Naive thymus-derived CD4-positive, alpha-beta T cell (primary cell): ENCODE measurements at regions of chr13 and their contacts with region 1.

Region 1: GRCh38 chr13:52617070-52618060 is 24.9 kb upstream of the HNRNPA1L2 start:
- DNase-seq: peak; percentile 61 to 85 (median 81)
- ATAC-seq: peak; percentile 97
- H3K4me3 ChIP-seq: peak overlapping the region; percentile 90
- H3K4me3 Mint-ChIP-seq: peak overlapping the region; percentile 86 to 100 (median 99)
- H3K27ac ChIP-seq: peak overlapping the region; percentile 76
- H3K27ac Mint-ChIP-seq: peak overlapping the region; percentile 95 to 97 (median 96)
- H3K4me1 ChIP-seq: peaks cover 0 to 13% of the 10 kb centered on the region in 2 donors
- H3K4me1 Mint-ChIP-seq: peaks cover 19 to 57% (median 39%) of the 10 kb centered on the region in 7 donors
- H3K27me3 ChIP-seq: no peaks in the 10 kb centered on the region
- H3K27me3 Mint-ChIP-seq: peaks cover 0 to 8% (median 0%) of the 10 kb centered on the region in 5 donors

Region 2: GRCh38 chr13:52599848-52600603 is 17.3 kb before region 1 on chr13:
- CTCF ChIA-PET with region 1: no interaction called
- POLR2A ChIA-PET with region 1: no interaction called
- intact Hi-C with region 1: no loop called
- DNase-seq: peak in 1 of 9 donors; percentile 35
- ATAC-seq: peak; percentile 31
- H3K4me3 ChIP-seq: no peak overlapping the region
- H3K4me3 Mint-ChIP-seq: peak overlapping the region; percentile 59 to 83 (median 77)
- H3K27ac ChIP-seq: no peak overlapping the region
- H3K27ac Mint-ChIP-seq: no peak overlapping the region
- H3K4me1 ChIP-seq: peaks cover 0 to 5% of the 10 kb centered on the region in 2 donors
- H3K4me1 Mint-ChIP-seq: peaks cover 5 to 16% (median 12%) of the 10 kb centered on the region in 7 donors
- H3K27me3 ChIP-seq: no peaks in the 10 kb centered on the region
- H3K27me3 Mint-ChIP-seq: peaks cover 18 to 48% (median 38%) of the 10 kb centered on the region in 5 donors

Region 3: GRCh38 chr13:52652196-52652979 is 35.0 kb after region 1 on chr13 and contains the start of gene SUGT1:
- CTCF ChIA-PET with region 1: interaction called, 25 read pairs
- POLR2A ChIA-PET with region 1: interaction called, 100 read pairs
- intact Hi-C with region 1: loop called (anchors 1 kb)
- DNase-seq: peak; percentile 90 to 97 (median 95)
- ATAC-seq: peak; percentile 96
- H3K4me3 ChIP-seq: peak within 1 kb of the TSS; percentile 87
- H3K4me3 Mint-ChIP-seq: no peak within 1 kb of the TSS
- H3K27ac ChIP-seq: peak within 1 kb of the TSS; percentile 94
- H3K27ac Mint-ChIP-seq: no peak within 1 kb of the TSS
- H3K4me1 ChIP-seq: peaks cover 17 to 22% of the 10 kb centered on the region in 2 donors
- H3K4me1 Mint-ChIP-seq: peaks cover 6 to 18% (median 13%) of the 10 kb centered on the region in 7 donors
- H3K27me3 ChIP-seq: no peaks in the 10 kb centered on the region
- H3K27me3 Mint-ChIP-seq: no peaks in the 10 kb centered on the region
- total RNA-seq, gene SUGT1: 21.3 to 49.0 (median 33.8) TPM

Region 4: DNA sequence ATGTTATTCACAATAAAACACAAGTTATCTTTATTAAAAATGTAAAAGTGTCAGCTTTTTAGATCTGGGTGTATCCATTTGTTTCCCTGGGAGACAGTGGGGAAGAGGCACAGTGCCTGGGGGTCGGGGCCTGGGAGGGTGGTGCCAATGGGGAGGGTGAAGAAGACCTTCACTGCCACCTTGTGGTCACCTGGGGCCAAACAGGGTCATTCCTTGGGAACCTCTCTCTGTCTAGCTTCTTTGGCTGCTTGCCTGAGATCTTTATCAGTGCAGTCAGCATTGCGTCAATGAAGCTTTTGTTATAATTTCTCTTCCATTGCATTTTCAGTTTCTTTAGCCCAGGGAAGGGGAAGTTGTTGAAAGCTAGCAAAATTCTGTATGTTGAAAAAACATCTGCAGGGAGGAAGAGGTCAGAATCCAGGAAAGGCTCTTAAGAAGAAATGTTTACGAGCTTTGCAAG is 192.0 kb after region 1 on chr13:
- CTCF ChIA-PET with region 1: no interaction called
- POLR2A ChIA-PET with region 1: no interaction called
- intact Hi-C with region 1: loop called in 1 of 2 experiments (anchors 2 kb)
- DNase-seq: peak in 6 of 9 donors; percentile 3 to 38 (median 14)
- ATAC-seq: peak; percentile 67
- H3K4me3 ChIP-seq: no peak overlapping the region
- H3K4me3 Mint-ChIP-seq: no peak overlapping the region
- H3K27ac ChIP-seq: no peak overlapping the region
- H3K27ac Mint-ChIP-seq: no peak overlapping the region
- H3K4me1 ChIP-seq: no peaks in the 10 kb centered on the region
- H3K4me1 Mint-ChIP-seq: peaks cover 0 to 6% (median 0%) of the 10 kb centered on the region in 7 donors
- H3K27me3 ChIP-seq: no peaks in the 10 kb centered on the region
- H3K27me3 Mint-ChIP-seq: peaks cover 13 to 43% (median 24%) of the 10 kb centered on the region in 5 donors

Region 5: DNA sequence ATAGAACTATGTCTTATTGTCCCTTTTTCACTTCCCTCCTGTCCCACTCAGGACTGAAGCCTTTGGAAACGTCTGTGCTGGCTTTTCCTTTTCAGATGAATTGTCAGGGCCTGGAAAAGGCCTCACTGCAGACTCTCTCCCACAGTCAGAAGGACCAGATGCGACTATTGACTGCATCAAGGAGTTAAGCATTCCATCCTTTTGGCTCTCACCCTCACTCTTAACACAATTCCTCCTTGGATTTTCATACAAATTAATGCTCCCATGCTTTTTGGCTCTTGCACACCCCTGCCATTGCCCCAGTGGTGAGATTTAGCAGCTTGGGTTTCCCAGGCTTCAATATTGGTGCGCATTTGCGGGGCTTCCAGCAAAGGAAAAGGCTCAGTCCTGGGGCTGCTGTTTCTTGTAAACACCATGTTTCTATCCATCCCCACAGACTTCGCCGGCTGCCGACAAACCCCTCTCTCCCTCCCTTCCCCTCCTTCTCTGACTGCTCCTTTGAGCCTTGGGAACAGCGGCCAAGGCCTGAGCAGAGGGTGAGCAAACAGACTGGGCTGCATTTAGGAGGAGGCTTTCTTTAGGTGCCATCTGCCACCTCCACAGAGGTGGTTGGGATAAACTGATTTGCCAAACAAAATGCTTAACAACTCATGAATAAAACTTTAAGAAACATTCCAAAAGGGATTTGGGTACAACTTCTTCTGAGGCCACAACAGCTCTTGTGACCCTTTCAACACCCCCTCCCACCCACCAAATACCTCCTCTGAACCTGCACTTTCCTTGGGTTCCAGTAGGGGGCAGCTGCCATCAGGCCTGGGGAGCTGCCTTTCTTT is 279.7 kb after region 1 on chr13:
- CTCF ChIA-PET with region 1: no interaction called
- POLR2A ChIA-PET with region 1: no interaction called
- intact Hi-C with region 1: no loop called
- DNase-seq: no peak
- ATAC-seq: no peak
- H3K4me3 ChIP-seq: no peak overlapping the region
- H3K4me3 Mint-ChIP-seq: no peak overlapping the region
- H3K27ac ChIP-seq: no peak overlapping the region
- H3K27ac Mint-ChIP-seq: no peak overlapping the region
- H3K4me1 ChIP-seq: no peaks in the 10 kb centered on the region
- H3K4me1 Mint-ChIP-seq: peaks cover 0 to 1% (median 0%) of the 10 kb centered on the region in 7 donors
- H3K27me3 ChIP-seq: no peaks in the 10 kb centered on the region
- H3K27me3 Mint-ChIP-seq: peaks cover 0 to 24% (median 5%) of the 10 kb centered on the region in 5 donors

Region 6: GRCh38 chr13:53151336-53152056 is 534.1 kb after region 1 on chr13:
- CTCF ChIA-PET with region 1: no interaction called
- POLR2A ChIA-PET with region 1: no interaction called
- intact Hi-C with region 1: loop called in 1 of 2 experiments (anchors 5 kb)
- DNase-seq: peak in 2 of 9 donors; percentile 1 to 4
- ATAC-seq: peak; percentile 54
- H3K4me3 ChIP-seq: no peak overlapping the region
- H3K4me3 Mint-ChIP-seq: no peak overlapping the region
- H3K27ac ChIP-seq: no peak overlapping the region
- H3K27ac Mint-ChIP-seq: no peak overlapping the region
- H3K4me1 ChIP-seq: no peaks in the 10 kb centered on the region
- H3K4me1 Mint-ChIP-seq: no peaks in the 10 kb centered on the region
- H3K27me3 ChIP-seq: no peaks in the 10 kb centered on the region
- H3K27me3 Mint-ChIP-seq: peaks cover 0 to 24% (median 20%) of the 10 kb centered on the region in 5 donors